ENCODE measurements at regions of chr4 and their contacts with region 1.

Region 1: GRCh38 chr4:6873792-6874461 is 35.7 kb upstream of the TBC1D14 start:
- DNase-seq: peak; percentile 52 to 73 (median 68)
- H3K4me3 ChIP-seq: no peak overlapping the region
- H3K27ac ChIP-seq: no peak overlapping the region
- H3K4me1 ChIP-seq: peaks cover 4 to 35% (median 17%) of the 10 kb centered on the region in 4 experiments
- H3K27me3 ChIP-seq: no peaks in the 10 kb centered on the region

Region 2: DNA sequence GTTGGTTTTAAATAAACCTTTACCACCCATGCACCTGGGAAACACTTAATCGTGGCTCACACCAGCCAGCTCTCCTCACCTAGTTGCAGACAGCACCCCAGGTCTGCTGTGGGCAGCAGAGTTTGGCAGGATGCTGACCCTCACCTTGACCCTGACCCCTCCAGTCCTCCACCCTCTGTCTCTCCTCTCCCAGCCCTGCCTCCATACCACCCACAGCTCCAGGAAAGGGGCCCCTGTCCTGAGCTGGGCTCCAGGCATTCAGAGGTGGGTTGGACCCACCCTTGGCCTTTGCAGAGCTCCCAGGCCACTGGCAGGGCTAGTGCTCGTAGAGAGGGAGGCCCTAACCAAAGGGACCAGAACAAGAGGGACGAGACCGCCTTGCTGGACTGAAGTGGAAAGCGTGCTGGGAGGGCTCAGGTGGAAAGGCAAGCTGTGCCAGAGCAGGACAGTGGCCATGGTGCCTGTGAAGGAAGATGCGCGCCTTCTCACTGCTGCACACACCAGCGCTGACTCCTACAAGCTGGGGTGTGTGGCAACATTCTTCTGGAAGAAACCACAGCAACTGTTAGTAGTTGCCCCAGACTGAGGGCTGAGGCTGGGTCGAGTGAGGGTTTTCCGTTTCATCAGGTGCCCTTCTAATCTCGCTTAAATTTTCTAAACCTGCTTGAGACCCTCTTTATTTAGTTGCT is 190.9 kb before region 1 on chr4:
- CTCF ChIA-PET with region 1: no interaction called
- POLR2A ChIA-PET with region 1: no interaction called
- DNase-seq: no peak
- H3K4me3 ChIP-seq: no peak overlapping the region
- H3K27ac ChIP-seq: no peak overlapping the region
- H3K4me1 ChIP-seq: peaks cover 0 to 9% (median 0%) of the 10 kb centered on the region in 4 experiments
- H3K27me3 ChIP-seq: no peaks in the 10 kb centered on the region

Region 3: GRCh38 chr4:6730603-6731317 is 143.2 kb before region 1 on chr4:
- CTCF ChIA-PET with region 1: interaction called, 10 read pairs
- POLR2A ChIA-PET with region 1: no interaction called
- DNase-seq: peak; percentile 73 to 86 (median 76)
- H3K4me3 ChIP-seq: no peak overlapping the region
- H3K27ac ChIP-seq: peak overlapping the region in 1 of 2 experiments; percentile 75
- H3K4me1 ChIP-seq: peaks cover 0 to 2% (median 0%) of the 10 kb centered on the region in 4 experiments
- H3K27me3 ChIP-seq: peaks cover 0 to 5% (median 4%) of the 10 kb centered on the region in 5 experiments

Region 4: GRCh38 chr4:6777636-6778281 is 96.2 kb before region 1 on chr4:
- CTCF ChIA-PET with region 1: interaction called, 25 read pairs
- POLR2A ChIA-PET with region 1: no interaction called
- DNase-seq: peak in 2 of 3 donors; percentile 55 to 60
- H3K4me3 ChIP-seq: peak overlapping the region in 1 of 7 experiments; percentile 19
- H3K27ac ChIP-seq: no peak overlapping the region
- H3K4me1 ChIP-seq: peaks cover 0 to 28% (median 11%) of the 10 kb centered on the region in 4 experiments
- H3K27me3 ChIP-seq: peaks cover 0 to 3% (median 0%) of the 10 kb centered on the region in 5 experiments

Region 5: GRCh38 chr4:6806924-6807636 is 66.8 kb before region 1 on chr4:
- CTCF ChIA-PET with region 1: interaction called, 12 read pairs
- POLR2A ChIA-PET with region 1: no interaction called
- DNase-seq: peak in 2 of 3 donors; percentile 26 to 36
- H3K4me3 ChIP-seq: no peak overlapping the region
- H3K27ac ChIP-seq: no peak overlapping the region
- H3K4me1 ChIP-seq: peaks cover 3 to 37% (median 10%) of the 10 kb centered on the region in 4 experiments
- H3K27me3 ChIP-seq: no peaks in the 10 kb centered on the region

Region 6: GRCh38 chr4:6885951-6886557 is 12.1 kb after region 1 on chr4:
- CTCF ChIA-PET with region 1: interaction called, 68 read pairs
- POLR2A ChIA-PET with region 1: interaction called, 4 read pairs
- DNase-seq: peak; percentile 81 to 96 (median 93)
- H3K4me3 ChIP-seq: no peak overlapping the region
- H3K27ac ChIP-seq: no peak overlapping the region
- H3K4me1 ChIP-seq: peaks cover 6 to 52% (median 48%) of the 10 kb centered on the region in 4 experiments
- H3K27me3 ChIP-seq: no peaks in the 10 kb centered on the region